ENCODE measurements at regions of chr11 and their contacts with region 1.

Region 1: GRCh38 chr11:58629857-58630256 is 7.4 kb downstream of the CNTF start:
- DNase-seq: peak; percentile 24
- H3K4me3 ChIP-seq: no peak overlapping the region
- H3K27ac ChIP-seq: no peak overlapping the region
- H3K27me3 ChIP-seq: no peaks in the 10 kb centered on the region
- CTCF ChIP-seq: peak; percentile 73

Region 2: GRCh38 chr11:58530236-58530635 is 99.6 kb before region 1 on chr11:
- CTCF ChIA-PET with region 1: no interaction called
- POLR2A ChIA-PET with region 1: no interaction called
- DNase-seq: no peak
- H3K4me3 ChIP-seq: no peak overlapping the region
- H3K27ac ChIP-seq: no peak overlapping the region
- H3K27me3 ChIP-seq: no peaks in the 10 kb centered on the region
- CTCF ChIP-seq: no peak

Region 3: GRCh38 chr11:58579192-58580129 is 50.4 kb before region 1 on chr11:
- CTCF ChIA-PET with region 1: interaction called, 60 read pairs
- POLR2A ChIA-PET with region 1: interaction called, 10 read pairs
- DNase-seq: peak; percentile 78
- H3K4me3 ChIP-seq: peak overlapping the region; percentile 85
- H3K27ac ChIP-seq: peak overlapping the region; percentile 94
- H3K27me3 ChIP-seq: no peaks in the 10 kb centered on the region
- CTCF ChIP-seq: peak; percentile 76

Region 4: DNA sequence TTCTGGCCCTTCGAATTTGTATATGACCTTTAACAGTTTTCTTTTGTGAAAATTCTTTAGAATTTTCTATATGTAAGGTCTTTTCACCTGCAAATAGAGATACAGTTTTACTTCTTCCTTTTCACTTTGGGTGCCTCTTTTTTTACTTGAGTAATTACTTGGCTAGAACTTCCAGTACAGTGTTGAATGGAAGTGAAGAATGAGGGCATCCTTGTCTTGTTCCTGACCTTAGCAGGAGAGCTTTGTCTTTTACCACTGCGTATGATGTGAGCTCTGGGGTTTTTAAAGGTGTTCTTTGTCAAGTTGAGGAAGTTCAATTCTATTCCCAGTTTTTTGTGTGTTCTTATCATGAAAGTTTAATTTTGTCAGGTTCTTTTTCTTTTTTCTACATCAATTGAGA is 29.3 kb before region 1 on chr11:
- CTCF ChIA-PET with region 1: interaction called, 16 read pairs
- POLR2A ChIA-PET with region 1: no interaction called
- DNase-seq: no peak
- H3K4me3 ChIP-seq: no peak overlapping the region
- H3K27ac ChIP-seq: no peak overlapping the region
- H3K27me3 ChIP-seq: no peaks in the 10 kb centered on the region
- CTCF ChIP-seq: no peak

Region 5: GRCh38 chr11:58617976-58618557 is 11.8 kb before region 1 on chr11:
- CTCF ChIA-PET with region 1: interaction called, 16 read pairs
- POLR2A ChIA-PET with region 1: interaction called, 3 read pairs
- DNase-seq: no peak
- H3K4me3 ChIP-seq: no peak overlapping the region
- H3K27ac ChIP-seq: no peak overlapping the region
- H3K27me3 ChIP-seq: no peaks in the 10 kb centered on the region
- CTCF ChIP-seq: no peak

Region 6: DNA sequence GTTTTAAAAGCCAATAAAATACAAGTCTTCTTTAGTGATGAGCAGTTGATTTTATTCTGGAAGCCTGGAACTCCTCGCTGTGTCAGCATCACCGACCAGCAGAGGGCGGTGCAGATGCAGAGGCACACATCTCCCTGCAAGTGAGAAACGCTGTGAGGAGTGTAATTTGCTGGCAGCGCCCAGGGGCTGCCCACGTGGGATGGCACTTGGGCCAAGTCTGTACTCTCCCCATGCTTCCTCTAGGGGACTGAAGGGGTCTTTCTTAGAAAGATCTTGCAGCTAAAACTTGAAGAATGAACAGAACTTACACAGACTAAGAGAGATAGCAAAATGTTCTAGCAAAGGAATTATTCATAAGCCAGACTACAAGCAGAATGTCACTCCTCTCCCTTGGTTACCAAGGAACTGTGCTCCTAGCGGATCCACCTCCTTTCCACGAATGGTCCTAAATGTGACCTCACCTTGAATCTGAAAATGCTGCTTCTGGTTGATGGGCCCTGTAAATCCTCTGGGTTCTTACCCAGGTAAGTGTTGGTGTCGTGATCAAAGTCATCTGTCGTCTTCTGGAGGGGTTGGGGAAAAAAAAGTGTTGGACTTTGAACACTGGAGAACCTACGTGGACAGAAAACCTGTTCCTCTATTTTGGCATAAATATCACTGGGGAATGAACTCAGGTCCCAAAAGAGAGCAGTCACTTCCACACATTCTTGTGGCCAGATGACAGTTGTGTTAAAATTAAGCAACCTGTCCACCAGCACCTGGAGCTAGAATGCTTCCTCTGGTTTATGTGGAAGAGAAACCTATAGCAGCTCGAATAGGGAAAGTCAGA is 24.4 kb after region 1 on chr11:
- CTCF ChIA-PET with region 1: interaction called, 32 read pairs
- POLR2A ChIA-PET with region 1: interaction called, 4 read pairs
- DNase-seq: peak; percentile 29
- H3K4me3 ChIP-seq: no peak overlapping the region
- H3K27ac ChIP-seq: no peak overlapping the region
- H3K27me3 ChIP-seq: no peaks in the 10 kb centered on the region
- CTCF ChIP-seq: peak; percentile 93